Breast epithelium (tissue), 4 donors: ENCODE measurements at regions of chrX and their contacts with region 1.

Region 1: GRCh38 chrX:99782516-99783040 is 627.5 kb downstream of the PCDH19 start:
- DNase-seq: no peak
- H3K4me3 ChIP-seq: no peak overlapping the region
- H3K27ac ChIP-seq: no peak overlapping the region
- H3K4me1 ChIP-seq: no peaks in the 10 kb centered on the region
- H3K27me3 ChIP-seq: peaks cover 0 to 15% of the 10 kb centered on the region in 2 donors
- CTCF ChIP-seq: no peak
- POLR2A ChIP-seq: no peak

Region 2: GRCh38 chrX:99705701-99706100 is 76.9 kb before region 1 on chrX:
- intact Hi-C with region 1: loop called (anchors 5 kb)
- DNase-seq: no peak
- H3K4me3 ChIP-seq: no peak overlapping the region
- H3K27ac ChIP-seq: no peak overlapping the region
- H3K4me1 ChIP-seq: no peaks in the 10 kb centered on the region
- H3K27me3 ChIP-seq: peaks cover 0 to 23% of the 10 kb centered on the region in 2 donors
- CTCF ChIP-seq: no peak
- POLR2A ChIP-seq: no peak